GM18951 (cell line): ENCODE measurements at regions of chr19 and their contacts with region 1.

Region 1: DNA sequence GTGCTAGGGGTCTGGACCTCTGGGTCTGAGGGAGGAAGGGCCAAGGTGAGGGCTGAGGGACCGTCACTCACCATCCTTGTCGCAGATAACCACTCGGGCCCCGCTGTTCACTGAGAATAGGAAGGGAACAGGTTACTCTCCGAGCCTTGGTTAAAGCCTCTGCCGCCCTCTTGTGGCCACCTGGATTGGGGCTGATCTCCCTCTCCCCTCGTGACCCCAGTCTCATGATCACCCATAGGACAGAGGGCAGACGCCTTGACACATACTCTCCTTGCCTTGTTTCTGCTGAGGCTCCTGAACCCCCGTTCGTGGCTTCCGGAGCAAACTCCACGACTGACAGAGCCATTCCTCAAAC is 580 bp downstream of the HSD17B14 start:
- POLR2A ChIP-seq: peak; percentile 17

Region 2: GRCh38 chr19:48794291-48794966 is 41.3 kb before region 1 on chr19:
- in situ Hi-C with region 1: loop called (anchors 5 kb)
- POLR2A ChIP-seq: no peak